ENCODE measurements at regions of chr6 and their contacts with region 1.

Region 1: GRCh38 chr6:148166339-148166968 is 176.2 kb upstream of the SASH1 start:
- DNase-seq: peak in 4 of 5 donors; percentile 23 to 30 (median 26)
- H3K4me3 ChIP-seq: no peak overlapping the region
- H3K4me3 Mint-ChIP-seq: no peak overlapping the region
- H3K27ac ChIP-seq: no peak overlapping the region
- H3K27ac Mint-ChIP-seq: no peak overlapping the region
- H3K4me1 ChIP-seq: no peaks in the 10 kb centered on the region
- H3K4me1 Mint-ChIP-seq: no peaks in the 10 kb centered on the region
- H3K27me3 ChIP-seq: no peaks in the 10 kb centered on the region
- H3K27me3 Mint-ChIP-seq: peaks cover 3 to 5% of the 10 kb centered on the region in 2 donors

Region 2: GRCh38 chr6:147506704-147507114 is 659.7 kb before region 1 on chr6:
- CTCF ChIA-PET with region 1: no interaction called
- POLR2A ChIA-PET with region 1: no interaction called
- intact Hi-C with region 1: loop called (anchors 5 kb)
- DNase-seq: no peak
- H3K4me3 ChIP-seq: no peak overlapping the region
- H3K4me3 Mint-ChIP-seq: peak overlapping the region; percentile 42 to 80 (median 61)
- H3K27ac ChIP-seq: no peak overlapping the region
- H3K27ac Mint-ChIP-seq: no peak overlapping the region
- H3K4me1 ChIP-seq: peaks cover 7% of the 10 kb centered on the region
- H3K4me1 Mint-ChIP-seq: peaks cover 6 to 20% (median 17%) of the 10 kb centered on the region in 4 donors
- H3K27me3 ChIP-seq: peaks cover 11% of the 10 kb centered on the region
- H3K27me3 Mint-ChIP-seq: peaks cover 46 to 48% of the 10 kb centered on the region in 2 donors

Region 3: GRCh38 chr6:147821295-147821897 is 345.1 kb before region 1 on chr6:
- CTCF ChIA-PET with region 1: no interaction called
- POLR2A ChIA-PET with region 1: no interaction called
- intact Hi-C with region 1: no loop called
- DNase-seq: no peak
- H3K4me3 ChIP-seq: no peak overlapping the region
- H3K4me3 Mint-ChIP-seq: no peak overlapping the region
- H3K27ac ChIP-seq: no peak overlapping the region
- H3K27ac Mint-ChIP-seq: no peak overlapping the region
- H3K4me1 ChIP-seq: no peaks in the 10 kb centered on the region
- H3K4me1 Mint-ChIP-seq: no peaks in the 10 kb centered on the region
- H3K27me3 ChIP-seq: no peaks in the 10 kb centered on the region
- H3K27me3 Mint-ChIP-seq: no peaks in the 10 kb centered on the region

Region 4: GRCh38 chr6:148112851-148113319 is 53.6 kb before region 1 on chr6:
- CTCF ChIA-PET with region 1: no interaction called
- POLR2A ChIA-PET with region 1: no interaction called
- intact Hi-C with region 1: no loop called
- DNase-seq: no peak
- H3K4me3 ChIP-seq: no peak overlapping the region
- H3K4me3 Mint-ChIP-seq: no peak overlapping the region
- H3K27ac ChIP-seq: no peak overlapping the region
- H3K27ac Mint-ChIP-seq: no peak overlapping the region
- H3K4me1 ChIP-seq: no peaks in the 10 kb centered on the region
- H3K4me1 Mint-ChIP-seq: no peaks in the 10 kb centered on the region
- H3K27me3 ChIP-seq: no peaks in the 10 kb centered on the region
- H3K27me3 Mint-ChIP-seq: peaks cover 4 to 6% of the 10 kb centered on the region in 2 donors

Region 5: GRCh38 chr6:148144917-148145521 is 21.4 kb before region 1 on chr6:
- CTCF ChIA-PET with region 1: interaction called, 17 read pairs
- POLR2A ChIA-PET with region 1: no interaction called
- intact Hi-C with region 1: loop called (anchors 1 kb)
- DNase-seq: peak in 4 of 5 donors; percentile 19 to 29 (median 23)
- H3K4me3 ChIP-seq: no peak overlapping the region
- H3K4me3 Mint-ChIP-seq: peak overlapping the region in 2 of 8 donors; percentile 45 to 59
- H3K27ac ChIP-seq: no peak overlapping the region
- H3K27ac Mint-ChIP-seq: no peak overlapping the region
- H3K4me1 ChIP-seq: peaks cover 15% of the 10 kb centered on the region
- H3K4me1 Mint-ChIP-seq: peaks cover 6 to 19% (median 12%) of the 10 kb centered on the region in 4 donors
- H3K27me3 ChIP-seq: peaks cover 4% of the 10 kb centered on the region
- H3K27me3 Mint-ChIP-seq: peaks cover 2 to 3% of the 10 kb centered on the region in 2 donors

Measured in CD4-positive, alpha-beta memory T cell (primary cell).